ENCODE measurements at regions of chr10 and their contacts with region 1.

Region 1: GRCh38 chr10:60208676-60209269 is 180.9 kb downstream of the ANK3 start:
- DNase-seq: no peak
- H3K4me3 ChIP-seq: no peak overlapping the region
- H3K27ac ChIP-seq: no peak overlapping the region
- H3K4me1 ChIP-seq: no peaks in the 10 kb centered on the region
- H3K27me3 ChIP-seq: no peaks in the 10 kb centered on the region
- CTCF ChIP-seq: peak; percentile 62 to 72 (median 69)
- EP300 ChIP-seq: no peak
- POLR2A ChIP-seq: no peak

Region 2: DNA sequence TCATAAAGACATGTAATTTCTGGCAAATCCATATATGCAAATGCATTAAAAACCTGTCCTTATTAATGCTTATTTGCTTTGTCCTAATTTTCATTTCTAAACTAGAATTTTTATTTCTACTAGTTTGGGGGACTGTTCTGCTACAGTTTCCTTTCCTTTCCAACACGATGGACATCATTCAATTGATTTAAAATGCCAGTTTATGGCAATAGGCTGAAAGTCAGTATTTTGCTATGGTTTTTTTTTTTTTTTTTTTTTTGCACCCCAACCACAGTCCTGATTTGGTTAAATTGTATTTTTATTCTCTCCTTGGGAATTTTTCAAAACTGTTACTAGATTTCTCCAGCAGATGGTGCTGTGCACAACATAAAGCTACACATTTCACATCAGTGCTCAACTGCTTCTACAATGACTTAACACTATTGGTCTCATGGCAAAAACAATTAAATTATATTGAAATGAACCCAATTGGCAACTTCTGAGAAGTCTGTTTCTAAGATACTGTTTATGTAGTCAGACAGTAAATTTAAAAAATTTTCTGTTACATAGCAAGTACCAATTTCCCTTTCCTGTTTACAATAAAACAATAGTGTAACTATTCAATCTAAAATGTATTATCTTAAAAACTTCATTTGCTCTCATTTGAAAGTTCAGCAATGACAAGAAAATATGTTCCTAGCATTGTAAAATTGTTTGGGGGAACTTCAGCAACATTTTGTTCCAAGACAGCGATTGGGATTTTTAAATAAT is 108.6 kb before region 1 on chr10:
- intact Hi-C with region 1: loop called (anchors 2 kb)
- DNase-seq: no peak
- H3K4me3 ChIP-seq: no peak overlapping the region
- H3K27ac ChIP-seq: no peak overlapping the region
- H3K4me1 ChIP-seq: peaks cover 0 to 7% (median 5%) of the 10 kb centered on the region in 4 donors
- H3K27me3 ChIP-seq: no peaks in the 10 kb centered on the region
- CTCF ChIP-seq: peak; percentile 56 to 58 (median 58)
- EP300 ChIP-seq: no peak
- POLR2A ChIP-seq: no peak

Region 3: DNA sequence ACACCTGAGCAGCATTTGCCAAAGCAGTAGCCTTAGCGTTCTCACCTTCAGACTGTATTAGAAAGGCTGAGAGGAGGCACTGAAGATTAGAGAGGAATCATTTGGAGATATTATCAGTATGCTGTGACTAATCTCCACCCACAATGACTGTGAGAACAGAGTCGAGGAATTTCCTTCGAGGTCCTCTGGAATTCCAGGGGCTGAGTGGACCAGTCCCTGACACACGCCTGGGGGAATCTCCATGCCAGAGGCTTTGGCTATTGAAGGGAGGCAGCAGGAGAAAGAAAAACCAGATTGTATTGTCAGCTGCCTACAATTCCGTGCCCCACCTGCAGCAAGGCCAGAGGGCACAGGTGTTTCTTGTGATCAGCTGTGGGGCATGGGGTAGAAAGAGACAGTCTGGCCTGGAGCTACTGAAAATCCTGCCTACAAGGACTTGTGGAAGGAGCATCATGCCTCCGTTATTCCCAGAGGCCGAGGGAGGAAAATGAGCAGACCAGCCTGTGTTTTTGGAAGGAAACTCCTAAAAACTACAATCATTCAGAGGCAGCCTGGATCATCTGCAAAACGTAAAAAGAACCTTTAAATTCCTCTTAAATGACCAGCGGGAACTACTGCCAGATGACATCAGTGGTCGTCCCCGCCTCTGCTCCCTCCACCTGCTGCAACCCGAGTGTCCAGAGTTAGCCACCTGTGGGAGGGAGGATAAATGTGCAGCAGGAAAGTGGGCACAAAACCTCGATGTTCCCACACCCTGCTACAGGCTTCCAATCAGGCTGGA is 206.2 kb after region 1 on chr10:
- intact Hi-C with region 1: no loop called
- DNase-seq: no peak
- H3K4me3 ChIP-seq: no peak overlapping the region
- H3K27ac ChIP-seq: no peak overlapping the region
- H3K4me1 ChIP-seq: no peaks in the 10 kb centered on the region
- H3K27me3 ChIP-seq: no peaks in the 10 kb centered on the region
- CTCF ChIP-seq: no peak
- EP300 ChIP-seq: no peak
- POLR2A ChIP-seq: no peak